MCF 10A (cell line): ENCODE measurements at regions of chr10 and their contacts with region 1.

Region 1: DNA sequence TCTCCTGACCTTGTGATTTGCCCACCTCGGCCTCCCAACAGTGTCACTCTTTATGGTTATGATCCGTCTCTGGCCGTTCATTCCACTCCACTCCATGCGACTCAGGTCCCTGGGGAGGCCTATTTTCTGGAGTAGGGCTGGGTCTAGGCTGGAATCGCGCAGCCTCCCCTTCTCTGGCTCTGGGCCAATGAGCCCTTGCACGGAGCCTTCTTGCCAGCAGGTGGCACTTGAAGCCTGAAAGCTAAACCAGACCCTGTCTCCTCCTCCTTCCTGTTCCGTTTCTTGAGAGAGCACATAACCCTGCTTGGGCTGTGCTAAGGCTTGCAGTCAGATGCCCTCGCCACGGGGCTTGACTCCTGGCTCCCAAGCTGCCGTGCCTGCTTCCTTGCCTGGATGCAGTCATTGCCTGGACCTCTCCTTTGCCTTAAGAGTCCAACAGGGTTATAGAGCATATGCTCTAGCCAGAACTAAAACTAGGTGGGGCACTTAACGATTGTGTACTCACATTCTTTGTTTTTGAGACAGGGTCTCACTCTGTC is 9.6 kb upstream of the DNAJB12 start:
- DNase-seq: peak; percentile 94
- H3K4me3 Mint-ChIP-seq: peak overlapping the region; percentile 45
- H3K27ac Mint-ChIP-seq: no peak overlapping the region
- H3K4me1 Mint-ChIP-seq: peaks cover 7% of the 10 kb centered on the region
- H3K27me3 Mint-ChIP-seq: no peaks in the 10 kb centered on the region
- CTCF ChIP-seq: peak; percentile 91

Region 2: GRCh38 chr10:72215652-72216549 is 148.4 kb before region 1 on chr10 and contains the starts of genes ANAPC16 and ASCC1:
- CTCF ChIA-PET with region 1: no interaction called
- POLR2A ChIA-PET with region 1: no interaction called
- intact Hi-C with region 1: no loop called
- DNase-seq: peak; percentile 89
- H3K4me3 Mint-ChIP-seq: peak within 1 kb of the TSS; percentile 100
- H3K27ac Mint-ChIP-seq: peak within 1 kb of the TSS; percentile 92
- H3K4me1 Mint-ChIP-seq: peaks cover 6% of the 10 kb centered on the region
- H3K27me3 Mint-ChIP-seq: no peaks in the 10 kb centered on the region
- CTCF ChIP-seq: no peak
- total RNA-seq, gene ANAPC16: 97.0 and 110 TPM in 2 replicates
- total RNA-seq, gene ASCC1: 26.3 and 31.6 TPM in 2 replicates

Region 3: DNA sequence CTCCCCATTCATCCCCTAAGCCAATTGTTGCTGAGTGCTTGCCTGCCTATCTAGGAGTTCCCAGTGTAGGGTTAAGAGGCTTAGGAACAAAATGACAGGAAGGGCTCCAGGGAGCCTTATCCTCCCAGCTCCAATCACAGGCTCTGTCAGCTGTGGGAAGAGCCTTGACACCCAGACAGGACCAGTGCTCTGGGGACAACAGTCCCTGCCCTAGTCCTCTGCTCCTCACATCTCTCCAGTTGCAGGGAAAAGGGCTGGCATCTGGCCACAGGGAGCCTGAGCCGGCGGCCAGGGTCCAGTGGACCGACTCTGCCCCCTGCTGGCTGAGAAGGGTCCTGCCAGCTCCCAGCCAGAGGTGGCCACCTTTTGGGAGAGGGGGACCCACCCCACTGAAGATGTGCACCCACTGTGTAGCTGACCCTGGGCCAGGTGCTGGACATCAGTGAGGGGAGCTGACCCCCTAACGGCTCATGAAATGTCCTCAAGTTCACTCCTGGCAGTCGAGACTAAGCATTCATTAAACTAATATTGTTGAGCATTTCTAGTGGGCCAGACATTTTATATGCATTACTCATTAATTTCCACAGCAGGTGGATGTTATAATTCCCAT is 27.2 kb before region 1 on chr10:
- CTCF ChIA-PET with region 1: no interaction called
- POLR2A ChIA-PET with region 1: no interaction called
- intact Hi-C with region 1: no loop called
- DNase-seq: peak; percentile 93
- H3K4me3 Mint-ChIP-seq: peak overlapping the region; percentile 72
- H3K27ac Mint-ChIP-seq: peak overlapping the region; percentile 79
- H3K4me1 Mint-ChIP-seq: peaks cover 42% of the 10 kb centered on the region
- H3K27me3 Mint-ChIP-seq: no peaks in the 10 kb centered on the region
- CTCF ChIP-seq: peak; percentile 96

Region 4: DNA sequence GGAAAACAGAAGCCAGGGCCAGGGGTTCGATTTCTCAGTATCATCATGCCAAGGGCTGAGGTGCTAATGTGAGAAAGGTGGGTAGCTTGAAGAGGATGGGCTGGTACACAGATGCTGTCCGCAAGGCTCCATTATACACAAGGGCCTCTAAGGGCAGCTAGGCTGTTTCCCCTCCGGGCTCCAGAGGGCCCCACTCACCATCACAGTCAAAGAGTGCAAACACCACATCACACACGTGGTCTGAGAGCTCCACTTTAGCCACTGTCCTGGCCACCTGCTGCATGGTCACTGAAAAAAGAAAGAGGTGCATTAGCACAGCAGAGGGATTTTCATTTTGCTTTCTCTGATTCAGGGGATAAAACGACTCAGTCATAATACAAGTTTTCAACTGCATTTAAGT is 11.3 kb after region 1 on chr10:
- CTCF ChIA-PET with region 1: interaction called, 19 read pairs
- POLR2A ChIA-PET with region 1: no interaction called
- intact Hi-C with region 1: no loop called
- DNase-seq: no peak
- H3K4me3 Mint-ChIP-seq: no peak overlapping the region
- H3K27ac Mint-ChIP-seq: no peak overlapping the region
- H3K4me1 Mint-ChIP-seq: no peaks in the 10 kb centered on the region
- H3K27me3 Mint-ChIP-seq: no peaks in the 10 kb centered on the region
- CTCF ChIP-seq: no peak

Region 5: DNA sequence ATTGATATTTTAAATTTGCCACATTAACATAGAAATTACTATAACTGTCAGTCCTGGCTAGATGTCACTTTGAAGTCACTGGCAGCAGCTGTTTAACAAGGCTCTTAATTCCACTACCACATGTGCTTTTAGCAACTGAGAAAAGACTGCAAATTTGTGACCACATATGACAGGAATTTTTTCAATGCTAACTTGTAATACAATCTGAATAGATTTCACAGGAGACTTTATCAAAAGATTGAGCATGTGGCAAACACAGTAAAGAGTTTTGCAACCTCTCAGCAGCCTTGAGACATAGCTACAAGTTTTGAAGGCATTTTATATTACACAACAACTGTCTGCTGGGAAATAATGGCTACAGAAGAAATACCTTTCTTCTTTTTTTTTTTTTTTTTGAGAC is 188.5 kb after region 1 on chr10:
- CTCF ChIA-PET with region 1: no interaction called
- POLR2A ChIA-PET with region 1: no interaction called
- intact Hi-C with region 1: no loop called
- DNase-seq: peak; percentile 73
- H3K4me3 Mint-ChIP-seq: no peak overlapping the region
- H3K27ac Mint-ChIP-seq: peak overlapping the region; percentile 31
- H3K4me1 Mint-ChIP-seq: peaks cover 5% of the 10 kb centered on the region
- H3K27me3 Mint-ChIP-seq: no peaks in the 10 kb centered on the region
- CTCF ChIP-seq: no peak

Region 6: GRCh38 chr10:72567884-72568640 is 203.8 kb after region 1 on chr10:
- CTCF ChIA-PET with region 1: interaction called, 5 read pairs
- POLR2A ChIA-PET with region 1: no interaction called
- intact Hi-C with region 1: loop called (anchors 2 kb)
- DNase-seq: peak; percentile 48
- H3K4me3 Mint-ChIP-seq: no peak overlapping the region
- H3K27ac Mint-ChIP-seq: no peak overlapping the region
- H3K4me1 Mint-ChIP-seq: peaks cover 6% of the 10 kb centered on the region
- H3K27me3 Mint-ChIP-seq: no peaks in the 10 kb centered on the region
- CTCF ChIP-seq: peak; percentile 9

Region 7: GRCh38 chr10:72834183-72834825 is 470.0 kb after region 1 on chr10:
- CTCF ChIA-PET with region 1: interaction called, 77 read pairs
- POLR2A ChIA-PET with region 1: interaction called, 4 read pairs
- intact Hi-C with region 1: loop called (anchors 1 kb)
- DNase-seq: peak; percentile 75
- H3K4me3 Mint-ChIP-seq: no peak overlapping the region
- H3K27ac Mint-ChIP-seq: no peak overlapping the region
- H3K4me1 Mint-ChIP-seq: peaks cover 8% of the 10 kb centered on the region
- H3K27me3 Mint-ChIP-seq: no peaks in the 10 kb centered on the region
- CTCF ChIP-seq: peak; percentile 70

Region 8: DNA sequence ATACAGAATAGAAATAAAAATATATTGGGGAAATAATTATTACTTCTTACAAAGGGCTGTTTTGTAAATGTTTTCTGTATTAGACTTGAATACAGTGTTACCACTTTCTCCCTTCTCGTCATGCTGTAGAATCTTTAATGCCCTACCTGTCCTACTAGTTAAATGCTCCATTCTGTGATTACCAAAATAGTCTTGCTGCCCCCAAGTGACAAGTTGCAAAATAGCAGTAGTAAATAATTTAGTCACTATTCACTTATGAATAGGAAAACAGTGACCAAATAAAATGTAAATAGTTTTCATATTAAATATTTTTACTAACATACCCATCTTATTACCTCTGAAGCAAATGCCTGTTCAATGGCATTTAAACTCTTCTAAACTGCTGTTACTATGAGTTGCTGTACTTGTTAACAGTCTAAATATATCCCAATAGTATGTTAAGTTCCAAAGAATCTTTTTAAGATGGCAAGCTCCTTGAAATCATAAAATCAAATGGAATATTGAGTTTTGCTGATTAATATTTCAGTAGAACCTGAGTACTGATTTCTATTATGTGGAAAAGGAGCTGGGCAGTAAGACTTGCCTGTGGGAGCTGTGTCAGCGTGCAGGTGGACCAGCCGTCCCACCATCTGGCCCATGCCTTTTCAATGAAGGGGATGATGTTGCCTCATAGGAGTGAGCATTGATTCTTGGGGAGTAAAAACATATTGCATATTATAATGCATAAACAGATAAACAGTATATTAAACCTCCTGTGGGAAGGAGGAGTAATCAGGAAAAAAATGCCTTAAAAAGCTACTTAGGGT is 511.1 kb after region 1 on chr10:
- CTCF ChIA-PET with region 1: interaction called, 18 read pairs
- POLR2A ChIA-PET with region 1: no interaction called
- intact Hi-C with region 1: no loop called
- DNase-seq: peak; percentile 51
- H3K4me3 Mint-ChIP-seq: no peak overlapping the region
- H3K27ac Mint-ChIP-seq: no peak overlapping the region
- H3K4me1 Mint-ChIP-seq: no peaks in the 10 kb centered on the region
- H3K27me3 Mint-ChIP-seq: no peaks in the 10 kb centered on the region
- CTCF ChIP-seq: peak; percentile 38